ENCODE measurements at regions of chr17 and their contacts with region 1.

Region 1: DNA sequence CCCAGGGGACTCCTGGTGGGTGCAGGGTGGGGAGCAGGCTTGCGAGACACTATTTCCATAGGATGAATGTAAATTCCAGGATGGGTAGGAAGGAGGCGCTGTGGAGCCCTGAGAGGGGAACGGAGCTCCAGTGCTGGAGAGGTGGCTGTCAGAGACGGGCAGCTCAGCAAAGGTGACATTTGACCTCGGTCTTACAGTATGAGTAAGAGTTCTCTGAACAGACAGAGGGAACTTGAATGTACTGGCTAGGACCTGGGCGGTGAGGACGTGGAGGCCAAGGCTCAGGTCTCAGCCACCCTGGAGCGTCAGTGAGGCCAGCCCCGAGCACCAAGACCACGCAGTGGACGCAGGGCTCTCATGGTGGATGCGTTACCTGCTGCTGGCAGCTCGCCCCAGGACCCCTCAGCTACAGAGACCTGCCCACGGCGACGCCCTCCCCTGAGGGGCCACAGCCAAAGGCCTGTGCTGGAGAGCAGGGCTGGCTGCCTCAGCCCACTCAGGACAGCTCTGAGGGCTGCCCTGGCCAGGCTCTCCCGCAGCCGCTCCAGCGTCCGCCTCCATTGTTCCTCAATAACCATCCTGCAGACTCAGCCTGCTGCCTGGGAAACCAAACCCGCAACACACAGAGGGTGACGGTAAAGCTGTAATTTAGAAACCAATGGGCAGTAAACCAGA is 65.9 kb upstream of the TNRC6C start:
- DNase-seq: peak; percentile 84
- ATAC-seq: peak; percentile 88
- H3K4me3 Mint-ChIP-seq: no peak overlapping the region
- H3K27ac Mint-ChIP-seq: no peak overlapping the region
- H3K4me1 Mint-ChIP-seq: peaks cover 18% of the 10 kb centered on the region
- H3K27me3 Mint-ChIP-seq: peaks cover 13% of the 10 kb centered on the region
- CTCF ChIP-seq: peak; percentile 82

Region 2: DNA sequence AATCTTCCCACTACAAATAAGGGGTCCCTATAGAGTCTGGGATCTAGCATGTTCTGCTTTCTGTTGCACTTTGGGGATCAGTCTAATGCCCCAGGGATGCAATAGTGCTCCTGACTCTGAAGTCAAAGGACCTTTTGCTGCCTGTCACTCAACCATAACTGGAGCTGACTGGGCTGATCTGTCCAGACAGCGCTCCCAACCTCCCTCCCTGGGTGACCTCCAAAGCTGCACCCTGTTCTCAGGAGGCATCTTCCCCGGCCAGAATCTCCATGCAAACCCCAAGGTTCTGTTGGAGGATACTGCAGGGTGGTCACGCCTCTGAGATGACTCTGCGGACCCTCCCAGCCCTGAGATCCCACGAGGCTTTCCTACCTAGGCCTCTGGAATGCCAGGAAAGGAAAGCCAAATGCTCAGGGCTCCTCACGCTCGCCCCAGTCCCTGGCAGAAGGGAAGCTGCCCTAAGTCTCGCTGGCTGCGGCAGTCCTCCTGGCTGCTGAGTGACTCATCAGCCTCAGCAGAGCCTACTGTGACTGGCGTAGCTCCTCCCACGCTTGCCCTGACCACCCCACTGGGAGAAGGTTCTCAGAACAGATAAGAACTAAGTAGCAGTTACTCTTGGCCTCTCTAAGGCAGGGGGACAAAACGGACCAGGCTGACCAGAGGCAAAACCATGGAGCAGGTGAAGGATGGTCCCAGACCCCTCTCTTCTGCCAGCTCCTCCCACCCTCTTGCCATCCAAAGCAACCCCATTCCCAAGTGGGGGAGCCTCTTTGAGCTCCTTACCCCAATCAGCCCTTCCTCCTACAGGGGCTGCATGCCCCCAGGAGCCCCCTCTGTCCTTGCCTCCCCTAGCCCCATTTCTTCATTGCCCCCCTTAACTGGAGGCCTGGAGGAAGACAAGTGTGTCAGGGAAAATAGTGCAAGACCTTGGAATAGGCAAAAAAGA is 58.2 kb before region 1 on chr17:
- CTCF ChIA-PET with region 1: interaction called, 14 read pairs
- POLR2A ChIA-PET with region 1: no interaction called
- DNase-seq: no peak
- ATAC-seq: peak; percentile 81
- H3K4me3 Mint-ChIP-seq: no peak overlapping the region
- H3K27ac Mint-ChIP-seq: 0 out of 2 replicates have a peak overlapping the region, but pooled peaks have one; percentile 53
- H3K4me1 Mint-ChIP-seq: peaks cover 46% of the 10 kb centered on the region
- H3K27me3 Mint-ChIP-seq: no peaks in the 10 kb centered on the region
- CTCF ChIP-seq: no peak

Region 3: DNA sequence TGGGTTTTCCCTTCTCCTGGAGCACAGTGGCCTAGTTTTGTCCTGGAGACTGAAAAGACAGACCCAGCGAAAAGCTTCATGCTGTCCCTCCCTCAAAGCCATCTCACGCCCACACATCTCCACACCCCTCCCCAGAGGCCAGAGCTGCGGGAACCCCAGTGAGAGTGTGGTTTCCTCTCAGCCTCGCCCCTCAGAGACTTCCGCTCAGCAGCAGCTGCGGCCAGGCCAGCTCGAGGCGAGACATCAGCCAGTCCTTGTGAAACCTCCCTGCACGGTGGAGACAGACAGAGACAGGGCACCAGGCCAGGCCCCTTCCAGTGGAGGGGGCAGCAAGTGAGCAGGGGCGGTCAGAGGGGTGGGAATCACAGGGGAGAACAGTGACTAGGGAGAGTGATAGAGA is 11.1 kb before region 1 on chr17:
- CTCF ChIA-PET with region 1: interaction called, 29 read pairs
- POLR2A ChIA-PET with region 1: interaction called, 10 read pairs
- DNase-seq: no peak
- ATAC-seq: peak; percentile 32
- H3K4me3 Mint-ChIP-seq: no peak overlapping the region
- H3K27ac Mint-ChIP-seq: 0 out of 2 replicates have a peak overlapping the region, but pooled peaks have one; percentile 17
- H3K4me1 Mint-ChIP-seq: peaks cover 16% of the 10 kb centered on the region
- H3K27me3 Mint-ChIP-seq: peaks cover 10% of the 10 kb centered on the region
- CTCF ChIP-seq: no peak

Region 4: DNA sequence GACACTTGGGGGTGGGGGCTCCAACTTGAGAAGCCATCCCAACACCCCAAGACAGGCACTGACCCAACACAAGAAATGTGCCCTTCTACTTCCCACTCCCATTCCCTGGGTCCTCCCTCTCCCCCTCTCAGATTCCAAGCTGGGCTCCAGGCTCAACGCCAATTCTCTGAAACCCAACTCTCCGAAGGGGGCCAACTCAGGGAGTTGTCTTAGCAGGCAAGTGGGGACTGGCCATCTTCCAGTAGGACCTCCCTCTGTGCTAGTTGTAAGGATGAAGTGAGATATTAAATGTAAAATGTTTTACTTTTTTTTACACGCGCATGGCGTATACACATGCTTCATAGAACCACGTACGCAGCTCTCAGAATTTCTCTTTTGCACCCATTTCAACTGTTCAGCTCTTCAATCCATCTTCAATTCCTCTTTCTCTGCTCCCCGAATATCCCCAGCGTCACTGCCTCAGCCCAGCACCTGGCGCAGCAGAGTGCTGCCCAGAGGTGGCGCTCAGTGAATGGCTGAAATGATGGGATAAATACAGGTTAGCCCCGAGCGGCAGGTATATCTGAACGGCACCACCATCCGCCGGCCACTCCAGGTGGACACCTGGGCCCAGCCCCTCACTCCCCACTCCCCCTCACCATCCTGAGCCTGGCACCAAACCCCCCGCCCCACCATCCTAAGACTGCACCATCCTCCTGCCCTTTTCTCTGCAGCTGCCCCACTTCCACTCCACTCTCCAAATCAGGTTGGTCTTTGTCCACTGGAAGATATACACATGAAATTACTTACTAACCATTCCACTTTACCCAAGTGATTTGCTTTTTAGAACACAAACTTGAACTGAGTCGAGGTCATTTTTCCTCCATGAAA is 22.0 kb after region 1 on chr17:
- CTCF ChIA-PET with region 1: interaction called, 10 read pairs
- POLR2A ChIA-PET with region 1: no interaction called
- DNase-seq: peak; percentile 67
- ATAC-seq: peak; percentile 98
- H3K4me3 Mint-ChIP-seq: no peak overlapping the region
- H3K27ac Mint-ChIP-seq: 0 out of 2 replicates have a peak overlapping the region, but pooled peaks have one; percentile 5
- H3K4me1 Mint-ChIP-seq: peaks cover 41% of the 10 kb centered on the region
- H3K27me3 Mint-ChIP-seq: peaks cover 3% of the 10 kb centered on the region; the same call in 1 of the 2 replicates
- CTCF ChIP-seq: no peak

Region 5: DNA sequence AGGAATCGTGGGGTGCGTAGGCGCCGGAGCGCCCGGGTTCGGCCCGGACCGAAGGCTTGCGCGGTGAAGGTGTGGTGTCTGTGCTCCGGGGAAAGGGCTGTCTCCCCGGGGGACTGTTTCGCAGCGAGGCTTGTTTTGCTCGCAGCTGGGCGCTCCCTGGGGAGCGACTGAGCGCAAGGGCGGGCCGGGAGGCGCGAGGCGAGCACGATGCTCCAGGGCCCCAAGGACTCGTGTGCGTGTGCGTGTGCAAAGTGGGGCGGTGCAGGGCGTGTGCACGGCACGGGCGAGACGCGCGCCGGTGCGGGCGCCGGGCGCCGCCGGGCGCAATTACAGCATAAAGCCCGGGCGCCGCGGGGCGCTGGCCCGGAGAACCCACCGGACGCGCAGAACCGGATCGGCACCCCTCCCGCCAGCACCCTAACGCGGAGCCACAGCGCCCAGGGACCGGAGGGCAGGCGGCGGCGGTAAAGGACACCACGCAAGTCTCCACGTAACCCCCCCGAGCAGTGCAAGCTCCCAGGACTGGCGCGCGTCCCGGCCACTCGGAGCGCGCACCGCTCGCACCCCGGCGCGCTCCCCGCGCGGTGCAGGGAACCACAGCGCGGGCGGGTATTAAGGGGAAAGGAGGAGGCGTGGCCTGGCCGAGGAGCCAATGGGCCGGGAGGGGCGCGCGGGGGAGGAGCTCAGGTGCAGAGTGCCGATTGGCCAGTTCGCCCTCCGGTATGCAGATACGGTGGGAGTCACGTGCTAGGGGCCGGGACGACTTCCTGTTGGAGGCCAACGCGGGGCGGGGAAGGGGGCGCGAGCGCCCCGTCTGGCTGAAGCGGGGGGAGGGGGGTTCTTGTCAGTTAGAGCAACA is 65.5 kb after region 1 on chr17 and contains the start of gene TNRC6C:
- CTCF ChIA-PET with region 1: interaction called, 23 read pairs
- POLR2A ChIA-PET with region 1: interaction called, 11 read pairs
- DNase-seq: peak; percentile 100
- ATAC-seq: peak; percentile 94
- H3K4me3 Mint-ChIP-seq: peak within 1 kb of the TSS; percentile 92
- H3K27ac Mint-ChIP-seq: peak within 1 kb of the TSS; percentile 78
- H3K4me1 Mint-ChIP-seq: peaks cover 55% of the 10 kb centered on the region
- H3K27me3 Mint-ChIP-seq: peaks cover 34% of the 10 kb centered on the region
- CTCF ChIP-seq: no peak
- total RNA-seq, gene TNRC6C: 39.9 to 52.3 TPM (median 41.8 TPM) in 3 replicates

Region 6: DNA sequence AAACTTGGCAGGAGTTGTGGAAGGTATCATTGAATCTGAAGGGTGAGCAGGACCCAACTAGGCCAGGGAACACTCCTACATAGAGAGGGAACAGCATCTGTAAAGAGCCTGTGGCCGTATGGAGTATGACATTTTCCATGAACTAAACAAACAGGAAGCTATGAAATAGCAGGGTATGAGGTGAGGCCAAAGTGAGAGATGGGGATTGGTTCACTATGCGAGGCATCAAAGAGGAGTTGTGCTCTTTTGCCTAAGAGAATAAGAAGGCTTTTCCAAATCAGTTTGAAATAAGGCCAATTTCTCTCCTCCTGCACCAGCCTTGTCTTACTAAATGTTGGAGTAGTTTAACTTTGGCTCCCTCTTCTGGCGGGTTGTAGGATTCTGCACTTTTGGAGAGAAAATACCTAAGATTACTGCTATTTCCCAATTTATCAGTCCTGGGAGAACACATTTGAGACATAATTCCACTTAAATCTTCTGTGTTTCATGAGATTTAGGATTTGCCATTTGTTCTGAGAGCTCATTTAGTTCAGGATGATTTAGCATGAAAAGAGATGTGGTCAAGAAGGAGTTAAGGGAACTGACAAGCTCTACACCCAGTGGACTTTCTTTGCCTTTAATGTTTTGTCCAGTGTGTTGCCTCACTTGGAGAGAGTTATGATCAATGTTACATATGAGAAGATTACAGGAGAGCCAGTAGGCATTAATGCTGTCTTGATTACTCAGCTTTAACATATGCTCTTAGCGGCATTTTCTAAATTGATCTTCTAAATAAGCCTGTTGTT is 121.3 kb after region 1 on chr17:
- CTCF ChIA-PET with region 1: interaction called, 41 read pairs
- POLR2A ChIA-PET with region 1: no interaction called
- DNase-seq: peak; percentile 44
- ATAC-seq: peak; percentile 63
- H3K4me3 Mint-ChIP-seq: no peak overlapping the region
- H3K27ac Mint-ChIP-seq: peak overlapping the region; percentile 50
- H3K4me1 Mint-ChIP-seq: peaks cover 4% of the 10 kb centered on the region
- H3K27me3 Mint-ChIP-seq: no peaks in the 10 kb centered on the region
- CTCF ChIP-seq: peak; percentile 49; the same call in 1 of the 2 replicates